Activated T-helper 2 cell treated with anti-CD3 and anti-CD28 coated beads, Interferon-gamma antibody, Interleukin-2, Interleukin-4, amounts not matched to agents 10 μg/mL and 5 μg/mL and 100 μg/mL, durations not matched to agents 14 hours and 24 hours and 36 hours (primary cell): ENCODE measurements at regions of chr2 and their contacts with region 1.

Region 1: DNA sequence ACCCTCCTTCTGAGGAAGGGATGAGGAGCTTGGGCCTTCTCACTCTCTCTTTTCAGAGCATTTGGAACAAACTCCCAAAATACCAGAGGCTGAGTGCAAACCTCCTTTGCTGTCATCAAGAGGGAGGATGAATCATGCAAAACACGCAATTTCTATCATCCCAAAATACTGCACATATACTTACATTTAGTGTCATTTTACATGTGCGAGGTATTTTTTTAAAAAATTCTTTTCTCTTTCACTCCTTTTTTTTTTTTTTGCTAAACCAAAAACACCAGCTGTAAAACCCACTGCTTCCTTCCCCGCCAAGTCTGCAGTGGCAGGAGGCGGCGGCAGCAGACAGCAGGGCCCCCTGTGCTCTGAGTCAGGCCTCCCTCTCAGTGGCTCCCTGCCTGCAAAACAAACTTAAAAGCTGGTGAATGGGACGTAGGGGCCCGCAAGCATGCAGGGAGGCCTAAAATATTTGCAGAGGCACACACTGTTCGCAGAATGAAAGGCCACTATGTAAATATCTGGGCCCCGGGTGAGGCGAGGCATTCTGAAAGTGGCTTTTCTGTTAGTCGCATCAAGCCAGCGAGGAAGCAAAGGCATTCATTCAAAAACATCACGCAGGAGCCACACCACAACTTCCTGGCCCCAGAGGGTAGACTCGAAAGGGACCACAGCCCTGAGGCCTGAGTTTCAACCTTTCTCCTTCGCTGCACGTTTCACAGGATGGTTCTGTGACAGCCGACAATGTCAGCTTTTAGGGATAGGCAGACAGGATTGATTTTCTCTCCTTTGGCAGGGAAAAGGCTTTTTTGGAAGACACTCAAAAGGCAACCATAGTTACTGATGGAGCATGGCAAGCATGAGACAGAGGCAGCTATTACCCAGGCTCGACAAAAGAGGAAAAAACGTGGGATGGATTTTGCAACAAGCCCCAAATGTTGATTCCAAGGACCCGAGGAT is 73.4 kb downstream of the ACTR2 start:
- DNase-seq: peak; percentile 69
- H3K4me3 Mint-ChIP-seq: peak overlapping the region; percentile 55
- H3K27ac Mint-ChIP-seq: peak overlapping the region; percentile 86
- H3K4me1 Mint-ChIP-seq: peaks cover 53% of the 10 kb centered on the region
- H3K27me3 Mint-ChIP-seq: peaks cover 13% of the 10 kb centered on the region

Region 2: DNA sequence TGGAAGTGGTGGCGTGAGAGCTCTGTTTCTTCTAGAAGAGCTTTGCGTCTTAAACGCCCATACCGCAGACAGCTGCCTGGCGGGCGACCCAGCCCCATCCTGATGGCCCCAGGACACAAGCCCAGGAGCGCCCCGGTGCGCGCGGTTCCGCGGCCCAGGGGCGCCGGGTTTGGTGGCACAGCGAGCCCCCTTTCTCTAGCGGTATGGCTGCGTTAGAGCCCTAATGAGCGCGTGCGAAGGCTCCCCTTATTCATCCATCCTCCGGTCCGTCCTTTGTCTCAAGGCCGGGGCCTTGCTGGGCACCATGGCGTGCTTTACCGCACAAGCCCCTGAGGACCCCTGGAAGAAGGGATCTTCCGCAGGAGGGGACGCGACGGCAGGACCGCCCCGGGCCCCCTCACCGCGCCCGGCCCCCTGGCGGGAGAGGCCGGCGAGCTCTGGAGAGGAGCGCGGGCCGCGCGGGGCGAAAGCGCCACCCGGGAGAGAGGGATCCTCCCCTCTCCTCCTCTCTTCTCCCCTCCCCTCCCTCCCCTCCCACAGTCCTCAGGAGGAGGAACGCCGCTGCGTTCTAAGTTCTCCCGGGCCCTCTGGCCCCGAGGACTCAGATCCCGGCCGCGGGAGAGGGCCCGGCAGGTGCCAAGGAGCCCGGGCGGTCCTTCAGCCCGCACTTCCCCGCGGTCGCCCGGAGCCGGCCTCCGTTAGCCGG is 312.5 kb before region 1 on chr2:
- intact Hi-C with region 1: loop called (anchors 5 kb)
- DNase-seq: peak; percentile 80
- H3K4me3 Mint-ChIP-seq: peak overlapping the region; percentile 84
- H3K27ac Mint-ChIP-seq: peak overlapping the region; percentile 90
- H3K4me1 Mint-ChIP-seq: peaks cover 65% of the 10 kb centered on the region
- H3K27me3 Mint-ChIP-seq: peaks cover 3% of the 10 kb centered on the region

Region 3: GRCh38 chr2:65227425-65228262 is 73.4 kb before region 1 on chr2 and contains the start of gene ACTR2:
- intact Hi-C with region 1: loop called (anchors 1 kb)
- DNase-seq: peak; percentile 95
- H3K4me3 Mint-ChIP-seq: peak within 1 kb of the TSS; percentile 98
- H3K27ac Mint-ChIP-seq: peak within 1 kb of the TSS; percentile 96
- H3K4me1 Mint-ChIP-seq: peaks cover 27% of the 10 kb centered on the region
- H3K27me3 Mint-ChIP-seq: no peaks in the 10 kb centered on the region
- total RNA-seq, gene ACTR2: 339 and 350 TPM in 2 replicates

Region 4: DNA sequence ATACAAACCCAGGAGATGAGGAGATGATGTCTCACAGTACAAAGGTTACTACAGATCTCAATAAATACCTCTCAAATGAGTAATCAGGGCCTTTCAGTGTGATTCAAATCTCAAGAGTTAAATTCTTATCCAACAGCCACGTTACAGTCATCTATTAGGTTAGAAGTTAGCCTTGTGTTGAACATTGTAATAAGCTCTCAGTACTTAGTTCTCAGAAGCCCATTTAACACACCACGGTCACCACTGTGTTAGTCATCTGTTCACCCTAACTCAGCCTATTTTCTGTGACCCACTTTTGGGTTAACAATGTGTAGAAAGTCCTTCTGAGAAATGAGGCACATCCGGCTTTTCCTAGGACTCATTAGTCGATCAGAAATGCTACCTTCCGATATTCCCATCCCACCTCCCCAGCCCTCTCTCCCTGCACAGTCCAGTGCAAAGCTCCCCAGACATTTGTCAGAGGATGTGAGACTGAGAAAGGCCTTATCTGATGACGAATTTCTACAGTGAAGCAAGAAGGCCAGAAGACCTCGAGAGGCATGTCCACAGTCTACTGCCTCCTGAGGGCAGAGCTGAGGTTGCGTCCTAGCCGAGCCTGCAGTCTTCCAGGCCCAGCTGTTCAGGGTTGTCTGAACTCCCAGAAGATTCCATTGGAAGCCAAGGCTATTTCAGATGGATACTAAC is 19.1 kb after region 1 on chr2:
- intact Hi-C with region 1: loop called (anchors 1 kb)
- DNase-seq: no peak
- H3K4me3 Mint-ChIP-seq: no peak overlapping the region
- H3K27ac Mint-ChIP-seq: peak overlapping the region; percentile 64
- H3K4me1 Mint-ChIP-seq: peaks cover 21% of the 10 kb centered on the region
- H3K27me3 Mint-ChIP-seq: peaks cover 2% of the 10 kb centered on the region

Region 5: GRCh38 chr2:65382776-65383357 is 81.8 kb after region 1 on chr2:
- intact Hi-C with region 1: loop called (anchors 1 kb)
- DNase-seq: peak; percentile 57
- H3K4me3 Mint-ChIP-seq: no peak overlapping the region
- H3K27ac Mint-ChIP-seq: peak overlapping the region; percentile 19
- H3K4me1 Mint-ChIP-seq: peaks cover 44% of the 10 kb centered on the region
- H3K27me3 Mint-ChIP-seq: peaks cover 19% of the 10 kb centered on the region

Region 6: DNA sequence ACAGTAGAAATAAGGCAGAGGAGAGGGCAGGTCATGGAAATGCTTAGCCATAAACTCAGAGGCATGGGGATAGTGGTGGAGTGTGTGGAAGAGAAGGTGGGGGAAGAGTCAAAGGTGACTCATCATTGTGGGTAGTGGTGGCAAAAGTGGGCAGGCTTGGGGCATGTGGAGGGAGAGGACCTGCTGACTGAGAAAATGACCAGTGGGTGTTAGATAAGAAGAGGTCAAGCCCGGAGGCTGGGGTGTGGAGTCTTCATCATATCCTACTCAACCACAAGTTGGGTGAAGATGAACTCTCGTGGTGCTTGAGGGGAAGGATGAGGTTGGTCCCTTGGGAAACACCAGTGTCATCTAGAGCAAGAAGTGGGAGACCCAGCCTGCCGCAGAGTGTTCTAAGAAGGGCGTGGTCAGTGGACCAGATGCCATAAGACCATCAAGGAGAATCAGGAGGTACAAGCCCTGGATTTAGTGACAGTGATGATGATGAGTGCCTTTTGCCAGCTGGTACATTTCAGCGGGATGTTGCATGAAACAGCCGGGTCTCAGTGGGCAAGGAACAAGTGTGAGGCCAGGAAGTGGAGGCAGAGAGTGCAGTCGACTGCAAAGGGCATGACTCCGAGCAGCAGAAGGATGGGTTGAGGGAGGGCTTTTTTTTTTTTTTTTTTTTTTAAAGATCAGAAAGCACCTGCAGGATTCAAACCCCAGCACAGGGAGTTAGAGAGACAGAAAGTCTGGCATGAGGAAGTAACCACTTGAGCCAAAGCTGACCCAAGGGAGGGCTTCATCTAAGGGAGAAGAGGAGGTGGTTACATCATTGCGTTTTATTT is 253.9 kb after region 1 on chr2:
- intact Hi-C with region 1: loop called (anchors 5 kb)
- DNase-seq: no peak
- H3K4me3 Mint-ChIP-seq: no peak overlapping the region
- H3K27ac Mint-ChIP-seq: no peak overlapping the region
- H3K4me1 Mint-ChIP-seq: peaks cover 16% of the 10 kb centered on the region
- H3K27me3 Mint-ChIP-seq: peaks cover 27% of the 10 kb centered on the region